ENCODE measurements at regions of chr4 and their contacts with region 1.

Region 1: GRCh38 chr4:81723927-81724587 is 252.3 kb upstream of the RASGEF1B start:
- DNase-seq: peak in 1 of 2 donors; percentile 33
- ATAC-seq: peak in 5 of 8 donors; percentile 43 to 63 (median 52)
- H3K4me3 ChIP-seq: no peak overlapping the region
- H3K27ac ChIP-seq: peak overlapping the region in 1 of 10 donors; percentile 1
- H3K4me1 ChIP-seq: peaks cover 0 to 22% (median 15%) of the 10 kb centered on the region in 9 donors
- H3K27me3 ChIP-seq: no peaks in the 10 kb centered on the region
- CTCF ChIP-seq: no peak

Region 2: DNA sequence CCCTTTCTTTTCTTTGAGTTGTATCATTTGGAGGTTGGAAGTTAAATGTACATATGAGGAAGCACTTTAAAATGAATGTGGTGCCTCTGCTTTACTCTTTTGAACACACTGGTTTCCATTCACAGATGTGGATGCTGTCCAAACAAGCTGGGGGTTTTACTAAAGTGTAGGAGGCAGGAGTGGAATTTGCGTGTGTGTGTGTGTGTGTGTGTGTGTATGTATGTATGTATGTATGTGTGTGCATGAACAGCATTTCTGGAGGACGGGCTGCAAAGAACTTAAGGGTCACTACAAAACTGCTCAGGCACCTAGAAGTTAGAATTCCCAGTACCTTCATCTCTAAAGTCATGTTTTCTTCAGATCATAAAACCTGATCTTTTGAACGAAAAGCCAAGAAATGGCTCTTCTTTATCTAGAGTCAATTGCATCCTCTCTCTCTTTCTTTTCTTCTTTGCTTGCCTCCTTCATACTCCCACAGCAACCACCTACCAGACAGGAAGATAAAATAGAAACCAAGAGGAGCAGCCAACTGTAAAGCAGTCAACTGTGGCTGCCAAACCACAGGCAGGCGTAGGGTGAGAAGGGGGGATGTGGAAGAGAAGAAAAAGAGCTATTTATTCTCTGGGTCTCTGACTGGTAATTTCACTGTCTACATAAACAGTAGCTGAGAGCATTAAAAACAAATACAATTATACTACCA is 75.3 kb before region 1 on chr4:
- intact Hi-C with region 1: no loop called
- DNase-seq: no peak
- ATAC-seq: peak in 1 of 8 donors; percentile 57
- H3K4me3 ChIP-seq: no peak overlapping the region
- H3K27ac ChIP-seq: no peak overlapping the region
- H3K4me1 ChIP-seq: peaks cover 0 to 16% (median 8%) of the 10 kb centered on the region in 9 donors
- H3K27me3 ChIP-seq: no peaks in the 10 kb centered on the region
- CTCF ChIP-seq: no peak

Region 3: DNA sequence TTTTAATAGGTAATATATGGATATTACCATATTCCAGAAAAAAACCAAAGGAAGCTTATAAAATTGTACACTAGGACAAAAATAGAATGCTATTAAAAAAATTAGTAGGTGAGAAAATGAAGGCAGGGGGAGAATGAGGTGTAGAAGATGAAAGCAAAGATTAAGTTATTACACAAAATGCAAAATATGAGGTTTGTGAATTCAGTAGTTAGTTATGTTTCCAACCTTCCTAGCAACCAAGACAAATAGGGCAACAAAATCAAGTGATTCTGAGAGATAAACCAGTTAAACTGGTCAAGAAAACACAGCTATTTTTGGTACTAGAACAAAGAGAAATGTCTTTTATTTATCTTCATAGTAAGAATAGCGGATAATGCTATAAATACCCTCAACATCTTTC is 47.7 kb after region 1 on chr4:
- intact Hi-C with region 1: loop called in 1 of 10 experiments (anchors 2 kb)
- DNase-seq: no peak
- ATAC-seq: no peak
- H3K4me3 ChIP-seq: no peak overlapping the region
- H3K27ac ChIP-seq: no peak overlapping the region
- H3K4me1 ChIP-seq: no peaks in the 10 kb centered on the region
- H3K27me3 ChIP-seq: no peaks in the 10 kb centered on the region
- CTCF ChIP-seq: no peak